Prostate gland (tissue), 2 donors: ENCODE measurements at regions of chr10 and their contacts with region 1.

Region 1: DNA sequence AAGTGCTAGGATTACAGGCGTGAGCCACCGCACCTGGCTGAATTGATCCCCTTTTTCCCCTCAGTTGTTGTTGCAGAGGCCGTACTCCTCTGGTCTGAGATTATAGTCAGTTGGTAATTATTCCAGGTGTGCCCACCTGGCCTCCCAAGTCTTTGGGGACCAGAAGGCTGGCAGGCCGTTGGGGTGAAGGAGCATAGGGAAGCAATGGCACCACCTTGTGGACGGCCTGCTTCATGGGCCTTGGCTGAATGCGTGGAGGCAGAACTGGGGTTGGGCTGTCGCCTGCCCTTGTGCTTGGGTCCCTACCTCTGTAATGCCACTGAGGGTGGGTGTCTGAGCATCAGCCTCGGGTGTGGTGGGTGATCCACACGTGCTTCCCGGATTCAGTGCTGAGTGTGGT is 125.7 kb downstream of the RGS10 start:
- DNase-seq: peak; percentile 27
- H3K4me3 ChIP-seq: no peak overlapping the region
- H3K27ac ChIP-seq: no peak overlapping the region
- H3K4me1 ChIP-seq: no peaks in the 10 kb centered on the region
- H3K27me3 ChIP-seq: no peaks in the 10 kb centered on the region
- CTCF ChIP-seq: peak; percentile 53 to 69 (median 66)
- POLR2A ChIP-seq: no peak

Region 2: DNA sequence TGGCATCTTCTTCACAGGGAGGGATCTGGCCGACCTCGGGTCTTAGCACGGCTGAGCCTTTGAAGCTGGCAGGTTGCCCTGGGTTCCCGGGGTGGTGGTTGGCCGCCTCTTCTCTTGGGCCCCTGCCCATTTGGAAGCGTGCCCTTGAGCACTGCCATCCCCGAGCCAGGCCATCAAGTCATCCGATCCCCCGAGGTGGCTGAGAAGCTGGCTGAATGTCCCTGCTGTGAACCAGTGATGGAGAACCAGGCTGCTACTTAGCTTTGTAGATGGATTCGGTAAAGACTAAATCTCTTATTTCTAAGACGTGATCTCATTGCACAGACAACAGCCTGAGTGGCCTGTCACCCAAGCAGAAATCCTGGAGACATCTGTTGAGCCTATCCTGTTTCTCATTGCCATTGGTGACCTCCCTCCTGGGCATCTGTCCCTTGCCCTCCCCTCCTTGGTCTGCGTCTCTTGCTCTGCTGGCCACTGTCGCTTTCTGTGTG is 135.2 kb before region 1 on chr10:
- intact Hi-C with region 1: loop called (anchors 10 kb)
- DNase-seq: peak; percentile 48
- H3K4me3 ChIP-seq: no peak overlapping the region
- H3K27ac ChIP-seq: peak overlapping the region in 1 of 2 donors; percentile 22
- H3K4me1 ChIP-seq: peaks cover 6% of the 10 kb centered on the region
- H3K27me3 ChIP-seq: no peaks in the 10 kb centered on the region
- CTCF ChIP-seq: no peak
- POLR2A ChIP-seq: no peak

Region 3: GRCh38 chr10:119355930-119356329 is 60.9 kb before region 1 on chr10:
- intact Hi-C with region 1: no loop called
- DNase-seq: no peak
- H3K4me3 ChIP-seq: no peak overlapping the region
- H3K27ac ChIP-seq: no peak overlapping the region
- H3K4me1 ChIP-seq: no peaks in the 10 kb centered on the region
- H3K27me3 ChIP-seq: no peaks in the 10 kb centered on the region
- CTCF ChIP-seq: no peak
- POLR2A ChIP-seq: no peak

Region 4: GRCh38 chr10:119370111-119370741 is 46.6 kb before region 1 on chr10:
- intact Hi-C with region 1: loop called (anchors 5 kb)
- DNase-seq: no peak
- H3K4me3 ChIP-seq: no peak overlapping the region
- H3K27ac ChIP-seq: peak overlapping the region; percentile 63 to 64
- H3K4me1 ChIP-seq: no peaks in the 10 kb centered on the region
- H3K27me3 ChIP-seq: no peaks in the 10 kb centered on the region
- CTCF ChIP-seq: no peak
- POLR2A ChIP-seq: no peak

Region 5: DNA sequence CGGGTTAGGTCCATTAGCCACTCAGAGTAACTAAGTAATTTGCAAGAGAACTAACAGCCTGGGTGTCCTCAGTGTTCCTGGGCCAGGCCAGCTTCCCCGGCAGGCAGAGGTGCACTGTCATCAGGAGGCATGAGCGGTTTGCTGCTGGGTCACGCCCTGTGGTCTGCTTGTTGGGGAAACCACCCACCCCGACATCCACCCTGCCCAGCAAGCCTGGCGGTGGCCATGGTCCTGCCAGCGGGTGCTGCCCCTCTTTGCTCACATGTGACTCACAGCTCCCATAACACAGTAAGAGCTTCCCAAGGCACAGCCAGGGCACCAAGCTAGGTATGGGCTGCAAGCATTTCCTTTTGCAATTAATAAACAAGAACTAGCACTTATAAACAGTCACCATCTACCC is 49.8 kb after region 1 on chr10:
- intact Hi-C with region 1: no loop called
- DNase-seq: no peak
- H3K4me3 ChIP-seq: no peak overlapping the region
- H3K27ac ChIP-seq: no peak overlapping the region
- H3K4me1 ChIP-seq: no peaks in the 10 kb centered on the region
- H3K27me3 ChIP-seq: no peaks in the 10 kb centered on the region
- CTCF ChIP-seq: no peak
- POLR2A ChIP-seq: no peak